Activated CD4-positive, alpha-beta T cell treated with anti-CD3 and anti-CD28 coated beads for 36 hours (primary cell): ENCODE measurements at regions of chr19 and their contacts with region 1.

Region 1: DNA sequence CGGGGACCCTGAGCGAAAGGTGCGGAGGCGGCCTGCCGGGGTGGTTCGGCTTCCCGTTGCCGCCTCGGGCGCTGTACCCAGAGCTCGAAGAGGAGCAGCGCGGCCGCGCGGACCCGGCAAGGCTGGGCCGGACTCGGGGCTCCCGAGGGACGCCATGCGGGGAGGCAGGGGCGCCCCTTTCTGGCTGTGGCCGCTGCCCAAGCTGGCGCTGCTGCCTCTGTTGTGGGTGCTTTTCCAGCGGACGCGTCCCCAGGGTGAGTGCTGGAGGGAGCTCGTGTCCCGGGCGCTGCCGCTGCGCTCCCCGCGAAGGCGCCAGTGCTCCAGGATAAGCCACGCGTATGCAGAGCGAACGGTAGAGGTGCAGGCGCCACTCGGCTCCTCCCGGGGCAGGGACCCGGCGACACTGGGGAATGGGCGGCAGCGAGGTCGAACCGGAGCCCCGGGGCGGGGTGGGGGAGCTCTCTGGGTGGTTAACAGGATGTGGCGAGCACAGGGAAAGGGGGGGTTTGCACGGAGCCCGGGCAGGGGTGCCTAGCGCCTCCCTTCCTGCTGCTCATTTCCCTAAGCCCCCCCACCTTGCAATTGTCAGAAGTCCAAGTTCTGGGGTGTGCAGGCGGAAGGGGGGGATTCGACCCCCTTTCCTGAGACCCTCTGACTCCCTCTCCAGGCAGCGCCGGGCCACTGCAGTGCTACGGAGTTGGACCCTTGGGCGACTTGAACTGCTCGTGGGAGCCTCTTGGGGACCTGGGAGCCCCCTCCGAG is at the start of gene IL27RA:
- DNase-seq: peak; percentile 83
- ATAC-seq: peak; percentile 79
- H3K4me3 Mint-ChIP-seq: peak within 1 kb of the TSS; percentile 92
- H3K27ac Mint-ChIP-seq: peak within 1 kb of the TSS; percentile 90
- H3K4me1 Mint-ChIP-seq: peaks cover 18% of the 10 kb centered on the region
- H3K27me3 Mint-ChIP-seq: no peaks in the 10 kb centered on the region
- total RNA-seq, gene IL27RA: 49.8 to 52.0 TPM

Region 2: GRCh38 chr19:13905938-13906904 is 125.7 kb before region 1 on chr19 and contains the starts of genes BRME1 and CC2D1A:
- CTCF ChIA-PET with region 1: interaction called, 3 read pairs
- POLR2A ChIA-PET with region 1: no interaction called
- intact Hi-C with region 1: loop called in 1 of 2 experiments (anchors 1 kb)
- DNase-seq: peak; percentile 99
- ATAC-seq: peak; percentile 97
- H3K4me3 Mint-ChIP-seq: peak within 1 kb of the TSS; percentile 75
- H3K27ac Mint-ChIP-seq: peak within 1 kb of the TSS; percentile 93
- H3K4me1 Mint-ChIP-seq: peaks cover 14% of the 10 kb centered on the region
- H3K27me3 Mint-ChIP-seq: no peaks in the 10 kb centered on the region
- total RNA-seq, gene BRME1: 5.3 to 5.5 TPM
- total RNA-seq, gene CC2D1A: 30.2 to 34.3 TPM

Region 3: DNA sequence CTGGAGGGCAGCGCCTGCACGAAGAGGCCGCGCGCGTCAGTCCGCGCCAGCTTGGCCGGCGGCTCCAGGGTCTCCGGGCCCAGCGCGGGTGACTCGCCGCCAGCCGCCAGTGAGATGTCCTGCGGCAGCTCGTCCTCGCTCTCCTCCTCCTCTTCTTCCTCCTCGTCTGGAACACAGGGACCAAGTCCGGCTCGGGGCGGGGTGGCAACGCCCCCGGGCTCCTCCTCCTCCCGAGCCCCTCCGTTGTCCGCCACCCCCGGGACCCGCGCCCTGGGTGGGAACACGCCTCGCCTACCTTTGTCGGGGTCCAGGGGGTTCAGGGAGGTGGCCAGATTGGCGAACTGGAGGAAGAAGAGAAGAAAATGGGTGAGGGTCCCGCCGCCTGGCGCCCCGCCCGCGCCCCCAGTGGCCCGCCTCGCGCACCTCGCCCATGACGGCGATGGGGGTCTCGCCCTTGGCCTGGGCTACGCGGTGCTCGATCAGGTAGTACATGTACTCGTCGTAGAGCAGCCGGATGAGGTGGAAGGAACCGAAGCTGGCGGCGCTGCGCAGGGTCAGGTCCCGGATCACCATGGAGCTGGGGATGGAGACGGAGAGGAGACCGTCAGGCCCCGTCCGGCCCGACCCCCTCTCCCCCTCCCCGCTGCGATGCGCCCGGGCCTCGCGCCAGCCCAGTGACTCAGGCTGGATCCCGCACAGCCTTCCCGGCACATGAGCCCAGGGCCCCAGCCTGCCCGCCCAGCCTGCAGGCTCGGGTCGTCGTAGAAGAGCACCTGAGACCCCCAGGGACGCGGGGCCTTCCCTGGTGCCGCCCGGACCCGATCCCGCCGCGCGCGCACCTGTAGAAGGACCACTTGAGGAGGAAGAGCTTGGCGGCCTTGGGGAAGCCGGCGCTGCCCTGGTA is 68.9 kb before region 1 on chr19:
- CTCF ChIA-PET with region 1: no interaction called
- POLR2A ChIA-PET with region 1: no interaction called
- intact Hi-C with region 1: no loop called
- DNase-seq: no peak
- ATAC-seq: no peak
- H3K4me3 Mint-ChIP-seq: no peak overlapping the region
- H3K27ac Mint-ChIP-seq: no peak overlapping the region
- H3K4me1 Mint-ChIP-seq: no peaks in the 10 kb centered on the region
- H3K27me3 Mint-ChIP-seq: no peaks in the 10 kb centered on the region

Region 4: GRCh38 chr19:13986348-13986904 is 45.5 kb before region 1 on chr19:
- CTCF ChIA-PET with region 1: no interaction called
- POLR2A ChIA-PET with region 1: no interaction called
- intact Hi-C with region 1: loop called (anchors 1 to 5 kb)
- DNase-seq: peak; percentile 100
- ATAC-seq: peak; percentile 92
- H3K4me3 Mint-ChIP-seq: peak overlapping the region; percentile 63
- H3K27ac Mint-ChIP-seq: peak overlapping the region; percentile 97
- H3K4me1 Mint-ChIP-seq: peaks cover 65% of the 10 kb centered on the region
- H3K27me3 Mint-ChIP-seq: no peaks in the 10 kb centered on the region

Region 5: DNA sequence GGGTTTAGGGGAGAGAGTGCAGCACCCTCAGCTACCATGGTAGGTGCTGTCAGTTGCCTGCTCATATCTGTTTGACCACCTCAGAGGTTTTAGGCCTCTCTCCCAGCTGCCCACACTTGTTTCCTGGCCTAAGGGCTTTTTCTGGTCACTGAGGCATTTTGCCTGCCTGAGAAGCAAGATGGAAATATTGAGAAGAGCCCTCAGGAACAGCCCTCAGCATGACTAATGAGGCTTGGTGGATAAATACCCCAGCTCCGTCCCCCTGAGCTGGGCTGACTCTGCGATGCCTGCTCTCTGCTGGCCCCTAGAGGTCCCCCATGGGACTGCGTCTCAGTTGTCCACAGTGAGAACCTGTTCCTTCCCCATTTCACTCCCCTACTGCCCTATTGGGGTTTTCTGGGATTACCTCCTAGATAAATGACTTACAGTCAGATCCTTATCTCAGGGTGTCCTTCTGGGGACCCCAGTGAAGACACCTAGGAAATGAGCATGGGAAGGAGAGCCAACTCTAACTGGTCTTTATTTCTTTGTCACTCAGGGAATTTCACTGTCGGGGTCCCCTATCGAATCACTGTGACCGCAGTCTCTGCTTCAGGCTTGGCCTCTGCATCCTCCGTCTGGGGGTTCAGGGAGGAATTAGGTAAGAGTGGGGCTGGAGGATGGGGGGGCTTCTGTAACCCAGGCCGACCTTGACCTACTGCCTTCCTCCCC is 16.7 kb after region 1 on chr19:
- CTCF ChIA-PET with region 1: interaction called, 15 read pairs
- POLR2A ChIA-PET with region 1: no interaction called
- intact Hi-C with region 1: no loop called
- DNase-seq: peak; percentile 87
- ATAC-seq: peak; percentile 87
- H3K4me3 Mint-ChIP-seq: no peak overlapping the region
- H3K27ac Mint-ChIP-seq: peak overlapping the region; percentile 25
- H3K4me1 Mint-ChIP-seq: peaks cover 4% of the 10 kb centered on the region
- H3K27me3 Mint-ChIP-seq: no peaks in the 10 kb centered on the region

Region 6: GRCh38 chr19:14059093-14059480 is 27.2 kb after region 1 on chr19:
- CTCF ChIA-PET with region 1: interaction called, 11 read pairs
- POLR2A ChIA-PET with region 1: no interaction called
- intact Hi-C with region 1: no loop called
- DNase-seq: peak; percentile 77
- ATAC-seq: peak; percentile 59
- H3K4me3 Mint-ChIP-seq: peak overlapping the region; percentile 50
- H3K27ac Mint-ChIP-seq: no peak overlapping the region
- H3K4me1 Mint-ChIP-seq: peaks cover 16% of the 10 kb centered on the region
- H3K27me3 Mint-ChIP-seq: peaks cover 31% of the 10 kb centered on the region

Region 7: GRCh38 chr19:14081325-14082093 is 49.6 kb after region 1 on chr19:
- CTCF ChIA-PET with region 1: interaction called, 5 read pairs
- POLR2A ChIA-PET with region 1: no interaction called
- intact Hi-C with region 1: loop called in 1 of 2 experiments (anchors 2 kb)
- DNase-seq: peak; percentile 99
- ATAC-seq: peak; percentile 95
- H3K4me3 Mint-ChIP-seq: peak overlapping the region; percentile 90
- H3K27ac Mint-ChIP-seq: peak overlapping the region; percentile 92
- H3K4me1 Mint-ChIP-seq: peaks cover 10% of the 10 kb centered on the region
- H3K27me3 Mint-ChIP-seq: no peaks in the 10 kb centered on the region

Region 8: GRCh38 chr19:14091813-14092462 is 60.0 kb after region 1 on chr19:
- CTCF ChIA-PET with region 1: no interaction called
- POLR2A ChIA-PET with region 1: no interaction called
- intact Hi-C with region 1: no loop called
- DNase-seq: peak; percentile 76
- ATAC-seq: peak; percentile 7
- H3K4me3 Mint-ChIP-seq: peak overlapping the region; percentile 81
- H3K27ac Mint-ChIP-seq: peak overlapping the region; percentile 98
- H3K4me1 Mint-ChIP-seq: peaks cover 20% of the 10 kb centered on the region
- H3K27me3 Mint-ChIP-seq: no peaks in the 10 kb centered on the region

Region 9: GRCh38 chr19:14164082-14164481 is 132.2 kb after region 1 on chr19:
- CTCF ChIA-PET with region 1: no interaction called
- POLR2A ChIA-PET with region 1: interaction called, 11 read pairs
- intact Hi-C with region 1: no loop called
- DNase-seq: no peak
- ATAC-seq: no peak
- H3K4me3 Mint-ChIP-seq: no peak overlapping the region
- H3K27ac Mint-ChIP-seq: no peak overlapping the region
- H3K4me1 Mint-ChIP-seq: peaks cover 26% of the 10 kb centered on the region
- H3K27me3 Mint-ChIP-seq: no peaks in the 10 kb centered on the region